Gastrocnemius medialis (tissue), 4 donors: ENCODE measurements at regions of chr1 and their contacts with region 1.

Region 1: DNA sequence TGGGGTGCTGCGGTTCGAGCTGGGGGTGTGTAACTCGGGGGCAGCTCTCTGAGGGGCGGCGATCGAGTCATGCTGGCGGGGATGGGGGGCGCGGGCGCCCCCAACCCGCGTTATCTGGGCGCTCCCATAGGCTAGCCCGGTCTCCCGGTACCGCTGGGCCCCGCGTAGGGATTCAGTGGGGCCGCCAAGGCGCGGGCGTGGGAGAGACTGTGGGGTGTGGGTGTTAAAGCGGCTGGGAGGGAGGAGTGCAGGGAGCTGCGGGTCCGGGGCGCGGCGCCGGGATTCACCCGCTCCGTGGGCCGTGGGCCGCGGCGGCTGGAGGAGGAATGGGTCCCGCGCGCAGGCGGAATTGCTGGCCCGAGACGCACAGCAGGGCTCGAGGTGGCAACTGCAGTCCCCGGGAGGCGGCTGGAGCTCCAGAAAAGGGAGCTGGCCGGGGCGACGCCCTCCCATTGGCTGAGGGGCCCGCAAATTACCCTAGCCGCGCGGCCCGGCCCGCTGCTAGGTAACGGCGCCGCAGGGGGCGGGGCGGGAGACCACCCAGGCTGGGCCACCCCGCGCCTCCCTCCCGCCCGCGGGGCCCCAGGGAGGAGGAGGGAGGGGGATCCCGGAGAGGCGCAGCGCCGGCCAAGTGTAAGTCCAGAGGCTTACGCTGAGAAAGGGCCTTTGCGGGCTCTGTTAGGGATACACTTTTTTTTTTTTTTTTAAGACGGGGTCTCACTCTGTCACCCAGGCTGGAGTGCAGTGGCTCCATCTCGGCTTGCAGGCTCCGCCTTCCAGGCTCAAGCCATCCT is at the start of gene PTCH2:
- DNase-seq: peak in 1 of 2 donors; percentile 30
- ATAC-seq: peak; percentile 62 to 64
- H3K4me3 ChIP-seq: peak within 1 kb of the TSS; percentile 55 to 64 (median 60)
- H3K27ac ChIP-seq: peak within 1 kb of the TSS in 3 of 4 donors; percentile 13 to 52 (median 27)
- H3K4me1 ChIP-seq: peaks cover 3 to 7% of the 10 kb centered on the region in 2 donors
- H3K27me3 ChIP-seq: no peaks in the 10 kb centered on the region
- CTCF ChIP-seq: no peak
- POLR2A ChIP-seq: peak in 1 of 2 donors; percentile 12
- total RNA-seq, gene PTCH2: 0.10 to 0.56 (median 0.20) TPM

Region 2: DNA sequence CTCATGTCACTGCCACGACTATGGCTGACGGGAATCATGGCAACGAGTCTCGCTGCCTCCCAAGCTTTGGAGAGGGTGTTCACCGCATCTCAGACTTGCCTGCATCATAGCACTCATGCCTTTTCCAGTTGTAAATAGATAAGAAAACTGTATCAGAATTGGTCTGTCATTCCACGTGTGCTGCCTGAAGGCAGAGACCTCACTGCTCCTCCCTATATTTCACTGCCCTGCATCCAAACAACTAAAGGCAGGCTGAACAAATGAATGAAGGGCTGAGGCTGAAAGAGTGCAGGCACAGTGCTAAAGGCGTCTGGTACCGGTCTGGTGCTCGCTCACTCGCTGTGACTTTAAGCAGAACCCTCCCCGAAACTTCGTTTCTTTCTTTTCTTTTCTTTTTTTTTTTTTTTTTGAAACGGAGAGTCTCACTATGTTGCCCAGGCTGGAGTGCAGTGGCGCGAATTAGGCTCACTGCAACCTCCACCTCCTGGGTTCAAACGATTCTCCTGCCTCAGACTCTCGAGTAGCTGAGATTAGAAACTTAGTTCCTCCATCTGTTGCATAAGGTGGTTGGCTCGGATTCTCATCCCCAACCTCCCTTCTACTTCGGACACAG is 142.8 kb after region 1 on chr1:
- in situ Hi-C with region 1: no loop called
- intact Hi-C with region 1: loop called (anchors 10 kb)
- DNase-seq: no peak
- ATAC-seq: peak; percentile 83 to 86
- H3K4me3 ChIP-seq: peak overlapping the region; percentile 64 to 85 (median 81)
- H3K27ac ChIP-seq: peak overlapping the region; percentile 81 to 96 (median 88)
- H3K4me1 ChIP-seq: peaks cover 24 to 28% of the 10 kb centered on the region in 2 donors
- H3K27me3 ChIP-seq: no peaks in the 10 kb centered on the region
- CTCF ChIP-seq: no peak
- POLR2A ChIP-seq: no peak